ENCODE measurements at regions of chr5 and their contacts with region 1.

Region 1: DNA sequence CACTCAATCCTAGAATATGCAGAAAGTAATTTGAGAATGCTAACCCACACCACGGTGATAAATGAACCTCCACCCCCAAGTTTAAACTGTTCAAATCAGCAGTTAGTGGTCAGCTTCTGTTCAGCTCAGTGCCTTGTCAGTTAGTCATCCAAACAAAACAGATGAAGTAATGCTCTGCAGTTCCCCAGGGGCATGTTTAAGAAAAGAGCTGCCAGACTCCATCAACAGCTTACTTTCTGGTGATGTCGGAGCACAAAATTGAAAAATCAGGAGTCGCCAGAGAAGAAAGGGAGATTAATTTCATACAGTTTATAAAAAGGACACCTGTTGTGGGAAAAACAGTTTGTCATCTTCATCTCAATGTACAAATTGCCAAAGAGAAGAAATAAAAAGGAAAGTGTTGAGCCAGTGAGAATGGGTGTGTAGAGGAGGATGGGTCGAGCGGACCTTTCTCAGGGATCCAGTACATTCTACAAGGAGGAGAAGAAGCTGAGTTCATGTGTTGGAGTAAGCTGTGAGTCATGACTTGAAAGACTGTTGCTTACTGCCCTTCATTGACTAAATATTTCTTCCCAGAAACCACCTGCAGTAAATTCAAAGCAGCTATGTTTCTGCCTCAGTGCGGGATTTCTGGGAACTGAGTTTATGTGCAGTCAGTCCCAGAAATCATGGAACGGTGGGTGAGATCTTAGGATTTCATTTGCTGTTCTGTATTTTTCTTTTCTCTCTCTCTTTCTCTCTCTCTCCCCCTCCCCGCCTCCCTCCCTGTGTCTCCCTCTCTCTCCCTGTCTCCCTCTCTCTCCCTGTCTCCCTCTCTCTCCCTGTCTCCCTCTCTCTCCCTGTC is 13.7 kb downstream of the TRIO start:
- DNase-seq: peak in 2 of 3 donors; percentile 27 to 47
- H3K4me3 ChIP-seq: no peak overlapping the region
- H3K4me3 Mint-ChIP-seq: no peak overlapping the region
- H3K27ac ChIP-seq: peak overlapping the region in 1 of 2 donors; percentile 38
- H3K27ac Mint-ChIP-seq: no peak overlapping the region
- H3K4me1 ChIP-seq: peaks cover 39 to 42% of the 10 kb centered on the region in 2 donors
- H3K4me1 Mint-ChIP-seq: peaks cover 14% of the 10 kb centered on the region
- H3K27me3 ChIP-seq: no peaks in the 10 kb centered on the region
- H3K27me3 Mint-ChIP-seq: no peaks in the 10 kb centered on the region
- CTCF ChIP-seq: no peak

Region 2: GRCh38 chr5:14250084-14250695 is 93.3 kb after region 1 on chr5:
- intact Hi-C with region 1: loop called in 1 of 2 experiments (anchors 10 kb)
- DNase-seq: peak; percentile 23 to 53 (median 42)
- H3K4me3 ChIP-seq: peak overlapping the region in 1 of 3 experiments; percentile 40
- H3K4me3 Mint-ChIP-seq: peak overlapping the region in 1 of 2 donors; percentile 51
- H3K27ac ChIP-seq: peak overlapping the region in 1 of 2 donors; percentile 39
- H3K27ac Mint-ChIP-seq: peak overlapping the region; percentile 24 to 87 (median 48)
- H3K4me1 ChIP-seq: peaks cover 22 to 24% of the 10 kb centered on the region in 2 donors
- H3K4me1 Mint-ChIP-seq: peaks cover 27% of the 10 kb centered on the region
- H3K27me3 ChIP-seq: no peaks in the 10 kb centered on the region
- H3K27me3 Mint-ChIP-seq: no peaks in the 10 kb centered on the region
- CTCF ChIP-seq: no peak

Measured in CD14-positive monocyte (primary cell).